GM12878 (cell line): ENCODE measurements at regions of chr1 and their contacts with region 1.

Region 1: DNA sequence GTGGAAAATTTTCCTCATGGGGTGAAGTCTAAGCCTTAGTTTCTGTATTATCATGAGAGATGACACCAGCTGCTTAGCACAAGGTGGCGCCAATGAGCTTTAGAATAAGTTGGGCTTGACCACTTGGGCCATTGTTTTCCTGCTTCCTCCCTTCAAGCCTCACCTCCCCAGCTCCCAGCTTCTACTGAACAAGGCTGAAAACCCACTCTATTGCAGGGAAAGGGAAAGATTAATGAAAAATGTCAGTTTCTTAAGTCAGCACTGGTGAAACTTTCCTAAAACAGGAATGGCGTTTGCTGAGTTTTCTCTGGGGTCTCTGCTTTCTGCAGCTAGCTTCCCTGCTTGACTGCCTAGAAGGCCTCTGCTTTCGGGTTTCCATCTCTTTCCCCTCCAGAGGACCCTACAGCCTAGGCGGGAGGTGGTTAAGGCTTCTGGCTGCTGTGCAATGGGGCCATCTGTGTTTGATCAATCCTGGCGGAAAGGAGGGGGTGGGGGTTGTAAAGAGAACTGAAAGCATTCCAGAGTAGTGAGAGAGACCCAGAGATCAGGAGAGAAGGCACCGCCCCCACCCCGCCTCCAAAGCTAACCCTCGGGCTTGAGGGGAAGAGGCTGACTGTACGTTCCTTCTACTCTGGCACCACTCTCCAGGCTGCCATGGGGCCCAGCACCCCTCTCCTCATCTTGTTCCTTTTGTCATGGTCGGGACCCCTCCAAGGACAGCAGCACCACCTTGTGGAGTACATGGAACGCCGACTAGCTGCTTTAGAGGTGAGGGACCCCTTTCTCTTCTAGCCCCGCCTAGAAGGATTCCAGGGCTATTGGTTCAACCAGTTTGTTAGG is at the start of gene OLFML3:
- DNase-seq: peak; percentile 31
- ATAC-seq: peak; percentile 86
- H3K4me3 ChIP-seq: no peak within 1 kb of the TSS
- H3K27ac ChIP-seq: no peak within 1 kb of the TSS
- H3K4me1 ChIP-seq: peaks cover 3% of the 10 kb centered on the region; the same call in 1 of the 2 replicates
- H3K27me3 ChIP-seq: no peaks in the 10 kb centered on the region
- CTCF ChIP-seq: peak; percentile 72 to 80 (median 79)
- EP300 ChIP-seq: no peak
- POLR2A ChIP-seq: no peak
- RAD21 ChIP-seq: peak; percentile 80
- polyA plus RNA-seq, gene OLFML3: not detected

Region 2: GRCh38 chr1:113652771-113653170 is 326.3 kb before region 1 on chr1:
- CTCF ChIA-PET with region 1: no interaction called
- POLR2A ChIA-PET with region 1: no interaction called
- RAD21 ChIA-PET with region 1: no interaction called
- SMC1A ChIA-PET with region 1: no interaction called
- in situ Hi-C with region 1: no loop called
- intact Hi-C with region 1: no loop called
- DNase-seq: no peak
- ATAC-seq: no peak
- H3K4me3 ChIP-seq: no peak overlapping the region
- H3K27ac ChIP-seq: no peak overlapping the region
- H3K4me1 ChIP-seq: no peaks in the 10 kb centered on the region
- H3K27me3 ChIP-seq: no peaks in the 10 kb centered on the region
- CTCF ChIP-seq: no peak
- EP300 ChIP-seq: no peak
- POLR2A ChIP-seq: no peak
- RAD21 ChIP-seq: no peak

Region 3: GRCh38 chr1:113859478-113860175 is 119.5 kb before region 1 on chr1:
- CTCF ChIA-PET with region 1: interaction called, 3 read pairs
- POLR2A ChIA-PET with region 1: no interaction called
- RAD21 ChIA-PET with region 1: no interaction called
- SMC1A ChIA-PET with region 1: interaction called, 11 read pairs
- in situ Hi-C with region 1: no loop called
- intact Hi-C with region 1: no loop called
- DNase-seq: peak; percentile 87
- ATAC-seq: peak; percentile 91
- H3K4me3 ChIP-seq: peak overlapping the region; percentile 51
- H3K27ac ChIP-seq: peak overlapping the region; percentile 84
- H3K4me1 ChIP-seq: peaks cover 50% of the 10 kb centered on the region
- H3K27me3 ChIP-seq: no peaks in the 10 kb centered on the region
- CTCF ChIP-seq: no peak; a peak in 1 of 6 replicates
- EP300 ChIP-seq: peak; percentile 30 to 91; a peak in 3 of 4 replicates
- POLR2A ChIP-seq: no peak
- RAD21 ChIP-seq: no peak

Region 4: DNA sequence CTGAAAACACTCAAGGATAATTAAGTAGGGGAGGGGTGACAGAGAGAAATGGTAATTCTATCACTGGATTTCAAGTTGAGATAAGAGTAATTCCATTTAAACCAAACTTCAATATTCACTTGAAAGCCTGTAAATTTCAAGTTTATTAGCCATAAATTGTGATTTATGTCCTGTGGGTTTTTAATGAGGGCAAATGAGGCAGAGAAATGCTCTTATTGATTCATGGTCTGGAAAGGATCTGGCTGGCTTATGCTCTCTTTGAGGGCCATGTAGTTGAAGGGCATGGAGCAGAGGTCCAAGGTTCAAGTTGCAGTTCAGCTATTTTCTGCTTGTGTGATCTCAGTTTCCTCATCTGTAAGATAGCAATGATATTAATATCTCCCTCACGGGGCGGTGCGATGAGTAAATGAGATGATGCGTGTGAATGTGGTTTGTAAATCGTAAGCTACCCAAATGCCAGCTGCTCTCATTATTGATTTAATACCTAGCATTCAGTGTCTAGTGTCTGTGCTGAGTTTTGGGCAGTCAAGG is 12.4 kb after region 1 on chr1:
- CTCF ChIA-PET with region 1: interaction called, 10 read pairs
- POLR2A ChIA-PET with region 1: no interaction called
- RAD21 ChIA-PET with region 1: interaction called, 5 read pairs
- SMC1A ChIA-PET with region 1: interaction called, 6 read pairs
- in situ Hi-C with region 1: no loop called
- intact Hi-C with region 1: no loop called
- DNase-seq: peak; percentile 31
- ATAC-seq: peak; percentile 84
- H3K4me3 ChIP-seq: no peak overlapping the region
- H3K27ac ChIP-seq: no peak overlapping the region; the same call in 1 of the 2 replicates
- H3K4me1 ChIP-seq: no peaks in the 10 kb centered on the region
- H3K27me3 ChIP-seq: no peaks in the 10 kb centered on the region
- CTCF ChIP-seq: no peak
- EP300 ChIP-seq: no peak
- POLR2A ChIP-seq: no peak
- RAD21 ChIP-seq: no peak

Region 5: GRCh38 chr1:114130846-114131525 is 151.9 kb after region 1 on chr1:
- CTCF ChIA-PET with region 1: interaction called, 17 read pairs
- POLR2A ChIA-PET with region 1: no interaction called
- RAD21 ChIA-PET with region 1: interaction called, 6 read pairs
- SMC1A ChIA-PET with region 1: interaction called, 22 read pairs
- in situ Hi-C with region 1: no loop called
- intact Hi-C with region 1: no loop called
- DNase-seq: peak; percentile 11
- ATAC-seq: no peak
- H3K4me3 ChIP-seq: no peak overlapping the region
- H3K27ac ChIP-seq: no peak overlapping the region
- H3K4me1 ChIP-seq: peaks cover 6% of the 10 kb centered on the region
- H3K27me3 ChIP-seq: peaks cover 2% of the 10 kb centered on the region in 2 experiments; a peak in 3 of 4 replicates
- CTCF ChIP-seq: no peak
- EP300 ChIP-seq: no peak
- POLR2A ChIP-seq: no peak
- RAD21 ChIP-seq: no peak

Region 6: DNA sequence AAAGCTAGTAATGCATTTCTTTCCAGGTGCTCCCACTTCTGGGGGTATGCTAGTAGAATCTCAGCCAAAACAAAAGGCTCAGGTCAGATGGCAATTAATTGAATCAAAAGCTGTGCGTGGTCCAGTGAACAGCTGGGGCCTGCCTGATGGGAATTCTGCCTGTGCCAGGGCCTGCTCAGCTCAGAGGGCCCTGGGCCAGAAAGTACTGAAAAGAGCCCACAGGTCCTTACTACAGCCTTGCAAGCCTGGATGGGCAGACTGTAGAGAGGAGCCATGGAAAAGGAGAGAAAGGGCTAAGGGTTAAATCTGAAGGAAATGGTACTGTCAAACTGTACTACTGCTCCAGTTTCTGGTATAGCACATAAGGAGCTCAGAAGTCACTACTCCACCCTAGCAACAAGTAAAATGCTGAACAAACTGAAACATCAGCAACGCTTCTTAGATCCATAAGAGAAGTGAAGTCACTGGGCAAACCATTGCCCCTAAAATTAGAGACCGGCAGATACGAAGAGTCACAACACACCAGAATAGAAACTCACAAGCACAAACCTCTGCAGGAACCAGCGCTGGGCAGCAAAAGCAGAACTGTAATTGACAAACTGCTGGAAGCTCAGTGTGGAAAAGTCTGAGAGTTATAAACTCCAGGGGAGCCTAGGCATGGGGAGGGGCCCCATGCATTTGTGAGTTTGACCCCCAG is 295.7 kb after region 1 on chr1:
- CTCF ChIA-PET with region 1: interaction called, 235 read pairs
- POLR2A ChIA-PET with region 1: no interaction called
- RAD21 ChIA-PET with region 1: interaction called, 96 read pairs
- SMC1A ChIA-PET with region 1: interaction called, 7 read pairs
- in situ Hi-C with region 1: loop called (anchors 5 kb)
- intact Hi-C with region 1: no loop called
- DNase-seq: no peak
- ATAC-seq: no peak
- H3K4me3 ChIP-seq: no peak overlapping the region
- H3K27ac ChIP-seq: no peak overlapping the region
- H3K4me1 ChIP-seq: no peaks in the 10 kb centered on the region
- H3K27me3 ChIP-seq: no peaks in the 10 kb centered on the region; a peak in 1 of 4 replicates
- CTCF ChIP-seq: no peak
- EP300 ChIP-seq: no peak
- POLR2A ChIP-seq: no peak
- RAD21 ChIP-seq: no peak

Region 7: GRCh38 chr1:114558544-114558943 is 579.5 kb after region 1 on chr1:
- CTCF ChIA-PET with region 1: interaction called, 3 read pairs
- POLR2A ChIA-PET with region 1: no interaction called
- RAD21 ChIA-PET with region 1: no interaction called
- SMC1A ChIA-PET with region 1: no interaction called
- in situ Hi-C with region 1: loop called (anchors 10 kb)
- intact Hi-C with region 1: no loop called
- DNase-seq: no peak
- ATAC-seq: peak; percentile 88
- H3K4me3 ChIP-seq: no peak overlapping the region
- H3K27ac ChIP-seq: no peak overlapping the region
- H3K4me1 ChIP-seq: peaks cover 11% of the 10 kb centered on the region
- H3K27me3 ChIP-seq: no peaks in the 10 kb centered on the region
- CTCF ChIP-seq: peak; percentile 32 to 55 (median 39)
- EP300 ChIP-seq: no peak
- POLR2A ChIP-seq: no peak
- RAD21 ChIP-seq: peak; percentile 69